ENCODE measurements at regions of chr15 and their contacts with region 1.

Region 1: GRCh38 chr15:94620632-94621031 is 389.3 kb downstream of the MCTP2 start:
- DNase-seq: no peak
- ATAC-seq: no peak
- H3K4me3 ChIP-seq: no peak overlapping the region
- H3K27ac ChIP-seq: no peak overlapping the region
- H3K4me1 ChIP-seq: no peaks in the 10 kb centered on the region
- H3K27me3 ChIP-seq: no peaks in the 10 kb centered on the region
- CTCF ChIP-seq: no peak
- POLR2A ChIP-seq: no peak

Region 2: GRCh38 chr15:94561036-94561689 is 59.5 kb before region 1 on chr15:
- intact Hi-C with region 1: loop called in 1 of 10 experiments (anchors 10 kb)
- DNase-seq: no peak
- ATAC-seq: no peak
- H3K4me3 ChIP-seq: no peak overlapping the region
- H3K27ac ChIP-seq: no peak overlapping the region
- H3K4me1 ChIP-seq: no peaks in the 10 kb centered on the region
- H3K27me3 ChIP-seq: no peaks in the 10 kb centered on the region
- CTCF ChIP-seq: no peak
- POLR2A ChIP-seq: no peak

Region 3: DNA sequence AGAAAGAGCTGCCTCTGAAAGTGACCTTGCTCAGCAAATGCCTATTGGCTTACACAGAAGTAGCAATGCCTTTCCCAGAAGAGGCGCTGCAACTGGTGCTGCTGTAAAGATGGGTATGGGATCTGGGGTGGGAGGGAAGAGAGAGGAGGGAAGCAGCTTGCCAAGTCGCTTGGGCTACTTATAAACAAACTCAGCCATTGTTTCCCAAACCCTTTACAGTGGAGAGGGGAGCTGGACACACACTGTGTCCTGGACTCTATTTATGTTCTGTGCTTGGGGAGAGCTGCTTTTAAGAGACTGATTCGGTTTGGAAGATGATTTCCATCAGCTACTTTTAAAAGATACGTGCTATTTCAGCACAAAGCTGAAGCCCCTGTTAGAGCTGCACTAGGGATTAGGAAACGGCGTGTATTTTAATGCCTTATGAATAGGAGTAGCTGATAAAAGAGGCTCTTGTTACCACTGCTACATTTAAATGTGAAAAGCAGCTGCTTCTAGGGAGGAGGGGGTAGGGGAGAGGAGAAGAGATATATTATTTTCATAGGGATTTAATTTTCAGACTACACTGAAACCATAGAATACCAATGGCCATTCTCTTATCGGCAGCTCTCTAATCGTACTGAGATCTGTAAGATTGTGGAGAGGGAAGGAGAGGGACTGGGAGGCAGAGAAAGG is 51.4 kb after region 1 on chr15:
- intact Hi-C with region 1: no loop called
- DNase-seq: peak in 3 of 5 donors; percentile 12 to 36 (median 30)
- ATAC-seq: peak; percentile 15 to 65 (median 46)
- H3K4me3 ChIP-seq: peak overlapping the region in 4 of 12 donors; percentile 0 to 17 (median 10)
- H3K27ac ChIP-seq: peak overlapping the region in 10 of 12 donors; percentile 2 to 56 (median 46)
- H3K4me1 ChIP-seq: peaks cover 0 to 15% (median 5%) of the 10 kb centered on the region in 12 donors
- H3K27me3 ChIP-seq: peaks cover 0 to 7% (median 0%) of the 10 kb centered on the region in 9 donors
- CTCF ChIP-seq: peak in 1 of 12 donors; percentile 17
- POLR2A ChIP-seq: no peak